Activated T-helper 1 cell treated with anti-CD3 and anti-CD28 coated beads, Interleukin-12 subunit alpha, Interleukin-12 subunit beta, Interleukin-2, Interleukin-4 antibody, amounts not matched to agents 30 ng/mL and 10 ng/mL and 1 ng/mL, durations not matched to agents 14 hours and 24 hours and 36 hours (primary cell): ENCODE measurements at regions of chr7 and their contacts with region 1.

Region 1: DNA sequence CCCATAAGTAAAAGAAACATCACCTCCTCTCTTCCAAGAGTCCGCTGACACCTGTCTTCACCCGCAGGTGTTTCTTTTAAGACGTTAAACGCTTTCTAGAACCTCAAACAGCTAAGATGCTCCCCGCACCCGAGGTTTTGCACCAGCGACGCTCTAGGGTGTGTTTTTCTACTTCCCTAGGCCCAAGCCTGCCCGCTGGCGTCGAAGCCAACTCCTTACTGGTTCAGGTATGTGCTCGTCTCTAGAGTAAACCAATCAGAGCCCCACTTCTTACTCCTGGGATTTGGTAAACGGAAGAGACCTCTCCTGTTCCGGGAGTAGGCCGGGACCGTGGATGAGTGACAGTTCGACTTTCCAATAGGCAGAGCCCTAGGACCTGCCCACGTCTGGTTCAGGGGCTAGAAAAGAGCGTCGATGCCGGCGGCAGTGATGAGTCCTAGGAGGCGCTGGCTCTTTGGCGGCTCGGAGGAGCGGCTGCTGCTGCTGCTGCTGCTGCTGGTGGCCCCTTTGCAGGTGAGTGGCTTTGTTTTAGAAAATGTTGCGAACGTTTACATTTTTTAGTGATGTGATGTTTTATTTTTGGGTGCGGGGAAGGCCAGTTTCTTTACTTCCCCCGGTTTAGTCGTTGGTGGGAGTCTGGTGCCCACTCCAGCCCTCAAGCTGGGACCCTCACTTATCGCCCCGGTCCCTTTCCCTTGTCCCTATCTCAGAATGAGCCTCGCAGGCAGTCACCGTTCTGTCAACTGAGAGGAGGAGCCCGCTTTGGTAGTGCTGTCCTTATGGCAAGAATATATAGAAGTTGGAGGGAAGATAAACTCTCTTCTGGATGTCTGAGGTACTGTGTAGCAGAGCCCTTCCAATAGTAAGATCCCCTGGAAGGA is at the start of gene BPGM:
- DNase-seq: peak; percentile 96
- H3K4me3 Mint-ChIP-seq: no peak within 1 kb of the TSS
- H3K27ac Mint-ChIP-seq: no peak within 1 kb of the TSS
- H3K4me1 Mint-ChIP-seq: peaks cover 37% of the 10 kb centered on the region
- H3K27me3 Mint-ChIP-seq: no peaks in the 10 kb centered on the region
- total RNA-seq, gene BPGM: 23.8 and 25.3 TPM in 2 replicates

Region 2: GRCh38 chr7:133252858-133253518 is 1393.7 kb before region 1 on chr7 and contains the start of gene EXOC4:
- intact Hi-C with region 1: loop called (anchors 5 kb)
- DNase-seq: peak; percentile 92
- H3K4me3 Mint-ChIP-seq: peak within 1 kb of the TSS; percentile 97
- H3K27ac Mint-ChIP-seq: peak within 1 kb of the TSS; percentile 93
- H3K4me1 Mint-ChIP-seq: peaks cover 43% of the 10 kb centered on the region
- H3K27me3 Mint-ChIP-seq: peaks cover 2% of the 10 kb centered on the region
- total RNA-seq, gene EXOC4: 51.6 and 58.6 TPM in 2 replicates

Region 3: DNA sequence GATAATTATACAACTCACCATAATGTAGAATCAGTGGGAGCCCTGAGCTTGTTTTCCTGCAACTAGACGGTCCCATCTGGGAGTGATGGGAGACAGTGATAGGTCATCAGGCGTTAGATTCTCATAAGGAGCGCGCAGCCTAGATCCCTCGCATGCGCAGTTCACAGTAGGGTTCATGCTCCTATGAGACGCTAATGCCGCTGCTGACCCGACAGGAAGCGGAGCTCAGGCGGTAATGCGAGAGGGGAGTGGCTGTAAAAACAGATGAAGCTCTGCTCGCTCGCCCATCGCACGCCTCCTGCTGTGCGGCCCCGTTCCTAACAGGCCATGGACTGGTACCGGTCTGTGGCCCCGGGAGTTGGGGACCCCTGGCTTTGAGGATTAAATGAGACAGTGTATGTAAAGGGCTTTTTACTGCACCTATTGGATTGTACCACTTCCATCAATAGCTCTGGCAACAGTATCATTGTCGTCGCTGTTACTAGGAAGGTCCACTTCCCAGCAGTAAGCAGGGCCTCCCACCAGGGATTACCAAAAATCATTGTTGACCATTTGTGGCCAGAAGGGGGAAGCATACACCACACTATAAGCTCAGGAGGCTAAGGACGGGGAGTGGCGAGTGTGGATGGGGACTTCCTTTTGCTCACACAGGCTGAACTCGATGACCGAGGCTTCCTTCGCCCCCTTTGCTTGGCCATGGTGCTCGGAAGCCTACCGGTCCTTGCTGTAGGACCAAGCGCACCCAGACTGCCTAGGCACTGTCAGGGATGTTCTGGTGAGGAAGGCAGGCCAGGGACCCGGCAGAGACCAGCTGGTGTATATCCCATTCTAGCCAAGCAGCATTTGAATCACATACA is 214.1 kb before region 1 on chr7:
- intact Hi-C with region 1: loop called (anchors 1 kb)
- DNase-seq: peak; percentile 61
- H3K4me3 Mint-ChIP-seq: peak overlapping the region; percentile 78
- H3K27ac Mint-ChIP-seq: peak overlapping the region; percentile 79
- H3K4me1 Mint-ChIP-seq: peaks cover 23% of the 10 kb centered on the region
- H3K27me3 Mint-ChIP-seq: peaks cover 3% of the 10 kb centered on the region

Region 4: GRCh38 chr7:134632937-134633540 is 13.6 kb before region 1 on chr7:
- intact Hi-C with region 1: loop called (anchors 1 kb)
- DNase-seq: no peak
- H3K4me3 Mint-ChIP-seq: no peak overlapping the region
- H3K27ac Mint-ChIP-seq: no peak overlapping the region
- H3K4me1 Mint-ChIP-seq: peaks cover 20% of the 10 kb centered on the region
- H3K27me3 Mint-ChIP-seq: peaks cover 5% of the 10 kb centered on the region

Region 5: DNA sequence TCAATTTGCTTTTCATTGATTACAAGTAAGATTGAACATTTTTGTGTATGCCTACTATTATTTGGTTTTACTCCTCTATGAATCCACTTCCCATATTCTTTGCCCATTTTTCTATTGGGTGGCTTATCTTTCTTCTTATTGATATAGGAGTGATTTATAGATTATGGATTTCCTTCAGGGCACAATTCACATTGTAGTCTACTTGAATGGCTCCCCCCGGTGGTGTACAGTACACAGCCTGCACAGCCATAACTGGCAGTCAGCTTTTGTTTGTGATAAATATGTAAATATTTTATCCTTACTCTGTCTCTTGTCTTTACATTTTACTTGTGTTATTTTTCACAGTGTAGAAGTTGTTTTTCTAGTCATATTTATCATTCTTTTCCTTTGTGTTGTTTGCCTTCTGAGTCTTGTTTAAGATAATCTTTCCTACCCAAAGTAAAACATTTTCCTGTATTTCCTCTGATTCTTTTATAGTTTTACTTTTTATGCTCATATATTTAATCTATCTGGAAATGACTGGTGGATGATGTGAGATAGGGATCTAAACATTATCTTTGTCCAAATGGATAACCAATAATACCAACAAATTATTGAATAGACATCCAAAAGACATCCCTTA is 108.8 kb after region 1 on chr7:
- intact Hi-C with region 1: loop called (anchors 1 kb)
- DNase-seq: peak; percentile 3
- H3K4me3 Mint-ChIP-seq: no peak overlapping the region
- H3K27ac Mint-ChIP-seq: no peak overlapping the region
- H3K4me1 Mint-ChIP-seq: peaks cover 7% of the 10 kb centered on the region
- H3K27me3 Mint-ChIP-seq: no peaks in the 10 kb centered on the region

Region 6: DNA sequence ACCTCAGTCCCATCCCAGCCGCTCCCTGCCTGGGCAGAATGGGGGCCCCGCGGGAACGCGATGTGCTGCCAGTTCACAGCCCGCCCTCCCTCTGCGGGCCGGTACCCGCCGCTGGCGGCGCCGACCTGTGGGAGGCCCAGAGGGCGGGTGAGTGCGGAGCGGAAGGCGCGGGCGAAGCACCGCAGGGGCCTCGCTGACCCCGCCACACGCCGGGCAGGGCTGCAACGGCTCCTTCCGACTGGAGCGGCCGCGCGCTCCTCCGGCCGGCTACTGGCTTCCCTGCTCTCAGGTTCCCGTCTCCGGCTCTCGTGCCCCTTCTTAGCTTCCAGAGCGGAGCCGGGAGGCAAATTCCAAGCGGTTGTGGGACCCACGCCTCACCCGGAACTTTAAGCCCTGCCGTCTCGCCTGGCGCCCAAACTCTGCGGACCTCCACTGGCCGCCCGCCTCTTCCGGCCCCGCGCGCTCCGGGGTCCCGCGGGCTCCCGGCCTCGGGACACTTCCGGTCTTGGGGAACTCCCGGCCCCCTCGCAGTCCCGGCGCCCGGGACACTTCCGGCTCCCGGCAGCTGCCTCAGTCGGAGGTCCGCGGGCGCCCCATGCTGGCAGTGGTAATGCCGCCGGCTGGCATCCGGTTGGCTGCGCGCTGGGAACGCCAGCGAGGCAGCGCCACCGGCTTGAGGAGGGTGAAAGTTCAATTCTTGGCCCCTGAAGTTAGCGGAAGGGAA is 523.8 kb after region 1 on chr7 and contains the start of gene CYREN:
- intact Hi-C with region 1: loop called (anchors 1 kb)
- DNase-seq: peak; percentile 84
- H3K4me3 Mint-ChIP-seq: peak within 1 kb of the TSS; percentile 95
- H3K27ac Mint-ChIP-seq: peak within 1 kb of the TSS; percentile 96
- H3K4me1 Mint-ChIP-seq: peaks cover 38% of the 10 kb centered on the region
- H3K27me3 Mint-ChIP-seq: no peaks in the 10 kb centered on the region
- total RNA-seq, gene CYREN: 58.8 and 58.9 TPM in 2 replicates

Region 7: GRCh38 chr7:135558337-135558767 is 911.7 kb after region 1 on chr7:
- intact Hi-C with region 1: loop called (anchors 1 kb)
- DNase-seq: peak; percentile 60
- H3K4me3 Mint-ChIP-seq: no peak overlapping the region
- H3K27ac Mint-ChIP-seq: no peak overlapping the region
- H3K4me1 Mint-ChIP-seq: peaks cover 16% of the 10 kb centered on the region
- H3K27me3 Mint-ChIP-seq: no peaks in the 10 kb centered on the region